PC-9 (cell line): ENCODE measurements at regions of chr6 and their contacts with region 1.

Region 1: DNA sequence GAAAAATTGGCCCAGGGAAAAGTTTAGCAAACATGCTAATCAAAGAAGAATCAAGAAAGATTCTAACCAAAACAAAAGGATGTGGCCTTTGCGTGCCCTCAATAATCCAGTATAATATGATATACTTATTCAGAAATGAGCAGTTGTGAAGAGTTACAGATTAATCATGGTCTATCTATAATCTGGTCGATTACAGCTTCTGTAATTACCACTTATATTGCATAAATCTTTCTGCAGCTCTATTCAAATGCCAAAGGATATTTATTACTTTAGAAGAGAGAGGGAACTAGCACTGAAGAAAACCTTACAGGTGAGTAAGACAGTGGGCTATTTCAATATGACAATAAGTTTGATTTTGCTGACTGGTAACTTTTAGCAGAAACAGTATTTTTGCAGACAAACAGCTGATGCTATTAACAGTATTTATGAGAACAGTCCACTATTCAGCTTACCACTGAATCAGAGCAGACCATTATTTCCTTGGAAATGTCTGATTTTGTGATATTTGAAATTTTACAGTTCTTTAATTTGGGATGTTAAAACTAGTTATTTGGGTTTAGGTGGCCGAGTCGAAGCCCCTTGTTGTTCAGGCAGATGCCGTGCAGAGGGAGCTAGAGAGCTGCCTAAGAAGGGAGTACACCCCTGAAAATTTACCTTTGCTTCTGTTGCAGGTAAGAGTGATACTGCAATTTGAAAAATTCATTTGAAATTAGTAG is 92.2 kb downstream of the CEP57L1 start:
- DNase-seq: peak; percentile 52 to 60
- H3K4me3 ChIP-seq: no peak overlapping the region
- H3K27ac ChIP-seq: no peak overlapping the region
- H3K4me1 ChIP-seq: no peaks in the 10 kb centered on the region
- H3K27me3 ChIP-seq: no peaks in the 10 kb centered on the region
- CTCF ChIP-seq: peak; percentile 98

Region 2: DNA sequence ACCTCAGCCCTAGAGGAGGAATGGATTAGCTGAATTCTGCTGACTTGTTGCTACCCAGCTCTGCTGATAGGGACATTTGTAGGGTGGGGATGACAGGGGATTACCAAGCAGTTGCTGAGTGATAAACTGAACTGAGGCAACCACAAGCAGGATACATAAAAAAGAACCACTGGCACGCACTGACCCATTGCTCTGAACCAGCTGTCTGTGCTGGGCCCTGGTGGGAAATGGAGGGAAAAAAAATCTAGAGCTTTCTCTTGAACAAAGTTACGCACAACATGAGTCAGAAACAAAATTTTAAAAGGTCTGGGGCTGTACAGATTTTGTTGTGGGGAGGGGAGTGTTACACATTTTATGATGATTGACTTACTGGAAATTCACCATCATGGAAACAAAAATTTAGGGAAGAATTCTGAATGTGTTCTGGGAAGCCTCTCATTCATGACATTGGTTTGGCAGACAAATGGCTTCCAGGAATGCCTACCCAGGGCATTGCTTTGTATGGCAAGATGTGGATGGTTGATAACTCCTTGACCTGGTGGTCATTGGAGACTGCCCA is 589.2 kb before region 1 on chr6:
- CTCF ChIA-PET with region 1: no interaction called
- POLR2A ChIA-PET with region 1: no interaction called
- intact Hi-C with region 1: no loop called
- DNase-seq: no peak
- H3K4me3 ChIP-seq: no peak overlapping the region
- H3K27ac ChIP-seq: peak overlapping the region; percentile 21; the same call in 1 of the 2 replicates
- H3K4me1 ChIP-seq: peaks cover 26% of the 10 kb centered on the region; the same call in 1 of the 2 replicates
- H3K27me3 ChIP-seq: no peaks in the 10 kb centered on the region
- CTCF ChIP-seq: no peak

Region 3: GRCh38 chr6:109455502-109456282 is 268.1 kb after region 1 on chr6 and contains the start of gene MICAL1:
- CTCF ChIA-PET with region 1: no interaction called
- POLR2A ChIA-PET with region 1: no interaction called
- intact Hi-C with region 1: loop called (anchors 5 kb)
- DNase-seq: peak; percentile 45 to 67
- H3K4me3 ChIP-seq: peak within 1 kb of the TSS; percentile 77
- H3K27ac ChIP-seq: no peak within 1 kb of the TSS
- H3K4me1 ChIP-seq: no peaks in the 10 kb centered on the region; the same call in 1 of the 2 replicates
- H3K27me3 ChIP-seq: no peaks in the 10 kb centered on the region
- CTCF ChIP-seq: no peak
- total RNA-seq, gene MICAL1: 10.8 and 17.7 TPM in 2 replicates

Region 4: DNA sequence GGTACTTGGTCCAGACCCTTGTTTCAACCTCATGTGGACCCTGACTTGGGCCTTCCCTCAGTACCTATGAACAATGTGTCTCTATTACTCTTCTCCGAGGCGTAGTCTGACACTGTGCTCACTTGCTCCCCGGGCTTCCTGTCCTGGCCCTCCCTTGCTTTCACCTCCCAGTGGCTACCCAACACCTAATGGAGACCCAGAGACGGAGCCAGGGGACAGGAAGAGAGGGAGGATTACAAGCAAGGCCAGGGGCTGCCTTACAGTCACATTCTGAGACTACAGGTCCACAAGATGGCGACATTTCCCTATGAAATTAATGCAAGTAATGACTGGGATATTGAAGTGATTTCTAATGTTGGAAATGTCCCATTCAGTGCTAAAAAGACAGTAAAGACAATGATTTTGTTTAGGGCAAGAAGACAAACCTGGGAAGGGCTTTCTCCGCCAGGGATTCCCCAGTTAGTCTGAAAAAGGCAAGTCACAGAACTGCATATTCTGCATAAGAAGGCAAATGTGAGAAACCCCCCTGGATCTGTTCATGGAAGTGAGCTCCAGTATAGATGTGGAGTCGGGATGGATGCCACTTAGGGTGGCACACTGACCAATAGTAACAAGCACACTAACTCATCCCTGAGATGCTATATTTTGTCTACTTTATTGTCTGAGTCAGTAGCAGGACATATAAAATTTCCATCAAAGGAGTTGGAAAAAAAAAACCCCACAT is 339.5 kb after region 1 on chr6:
- CTCF ChIA-PET with region 1: no interaction called
- POLR2A ChIA-PET with region 1: no interaction called
- intact Hi-C with region 1: loop called (anchors 1 kb)
- DNase-seq: peak; percentile 33 to 55
- H3K4me3 ChIP-seq: no peak overlapping the region
- H3K27ac ChIP-seq: no peak overlapping the region
- H3K4me1 ChIP-seq: no peaks in the 10 kb centered on the region
- H3K27me3 ChIP-seq: no peaks in the 10 kb centered on the region
- CTCF ChIP-seq: peak; percentile 80

Region 5: DNA sequence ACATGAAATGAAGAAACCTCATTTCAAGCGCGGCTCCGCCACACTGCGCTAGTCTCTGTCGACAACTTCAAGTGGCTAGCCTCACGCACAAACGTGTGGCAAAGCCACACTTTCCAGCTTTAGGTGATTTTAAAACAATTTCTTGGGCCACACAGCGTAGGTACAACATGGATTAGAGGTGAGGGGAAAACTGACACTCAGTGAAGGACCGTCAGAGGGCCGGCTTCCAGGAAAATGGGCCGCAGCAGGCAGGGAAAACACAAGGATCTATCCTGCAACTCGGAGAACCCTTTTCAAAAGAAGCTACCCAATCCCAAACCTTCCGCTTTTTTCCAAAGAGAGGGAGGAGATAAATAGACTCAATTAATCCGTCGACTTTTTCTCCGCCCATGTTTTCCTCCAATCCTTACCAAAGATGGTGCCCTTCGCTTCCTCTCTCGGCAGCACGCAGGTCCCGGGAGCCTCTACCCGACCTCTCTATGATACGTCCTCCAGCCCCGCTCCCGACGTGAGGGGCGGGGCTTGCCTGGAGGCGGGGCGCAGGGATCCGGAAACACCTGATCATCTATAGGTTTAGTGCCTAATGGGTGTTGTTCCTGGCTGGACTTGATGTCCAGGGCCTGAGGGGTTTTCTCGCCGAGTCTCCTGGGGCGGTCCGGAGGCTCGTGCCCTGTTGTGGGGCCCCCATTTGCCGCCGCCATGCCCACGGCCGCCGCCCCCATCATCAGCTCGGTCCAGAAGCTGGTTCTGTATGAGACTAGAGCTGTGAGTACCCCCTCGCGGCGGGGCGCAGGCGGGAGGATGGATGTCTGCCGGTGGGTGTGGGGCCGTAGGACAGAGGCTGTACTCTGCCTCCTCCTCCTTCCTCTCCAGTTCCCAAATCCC is 503.4 kb after region 1 on chr6 and contains the starts of genes AK9 and FIG4:
- CTCF ChIA-PET with region 1: no interaction called
- POLR2A ChIA-PET with region 1: no interaction called
- intact Hi-C with region 1: loop called (anchors 5 kb)
- DNase-seq: peak; percentile 94
- H3K4me3 ChIP-seq: peak within 1 kb of the TSS; percentile 92
- H3K27ac ChIP-seq: peak within 1 kb of the TSS; percentile 74
- H3K4me1 ChIP-seq: peaks cover 39% of the 10 kb centered on the region
- H3K27me3 ChIP-seq: no peaks in the 10 kb centered on the region
- CTCF ChIP-seq: no peak; the same call in 1 of the 2 replicates
- total RNA-seq, gene AK9: 6.4 and 7.4 TPM in 2 replicates
- total RNA-seq, gene FIG4: 15.4 and 16.5 TPM in 2 replicates